Naive thymus-derived CD4-positive, alpha-beta T cell (primary cell): ENCODE measurements at regions of chr12 and their contacts with region 1.

Region 1: GRCh38 chr12:47715393-47715876 is 9.6 kb upstream of the RPAP3 start:
- DNase-seq: peak; percentile 56 to 83 (median 75)
- ATAC-seq: peak; percentile 87
- H3K4me3 ChIP-seq: no peak overlapping the region
- H3K4me3 Mint-ChIP-seq: peak overlapping the region in 7 of 10 donors; percentile 15 to 54 (median 44)
- H3K27ac ChIP-seq: no peak overlapping the region
- H3K27ac Mint-ChIP-seq: peak overlapping the region; percentile 26 to 91 (median 81)
- H3K4me1 ChIP-seq: peaks cover 0 to 25% of the 10 kb centered on the region in 2 donors
- H3K4me1 Mint-ChIP-seq: peaks cover 17 to 34% (median 26%) of the 10 kb centered on the region in 7 donors
- H3K27me3 ChIP-seq: no peaks in the 10 kb centered on the region
- H3K27me3 Mint-ChIP-seq: no peaks in the 10 kb centered on the region

Region 2: DNA sequence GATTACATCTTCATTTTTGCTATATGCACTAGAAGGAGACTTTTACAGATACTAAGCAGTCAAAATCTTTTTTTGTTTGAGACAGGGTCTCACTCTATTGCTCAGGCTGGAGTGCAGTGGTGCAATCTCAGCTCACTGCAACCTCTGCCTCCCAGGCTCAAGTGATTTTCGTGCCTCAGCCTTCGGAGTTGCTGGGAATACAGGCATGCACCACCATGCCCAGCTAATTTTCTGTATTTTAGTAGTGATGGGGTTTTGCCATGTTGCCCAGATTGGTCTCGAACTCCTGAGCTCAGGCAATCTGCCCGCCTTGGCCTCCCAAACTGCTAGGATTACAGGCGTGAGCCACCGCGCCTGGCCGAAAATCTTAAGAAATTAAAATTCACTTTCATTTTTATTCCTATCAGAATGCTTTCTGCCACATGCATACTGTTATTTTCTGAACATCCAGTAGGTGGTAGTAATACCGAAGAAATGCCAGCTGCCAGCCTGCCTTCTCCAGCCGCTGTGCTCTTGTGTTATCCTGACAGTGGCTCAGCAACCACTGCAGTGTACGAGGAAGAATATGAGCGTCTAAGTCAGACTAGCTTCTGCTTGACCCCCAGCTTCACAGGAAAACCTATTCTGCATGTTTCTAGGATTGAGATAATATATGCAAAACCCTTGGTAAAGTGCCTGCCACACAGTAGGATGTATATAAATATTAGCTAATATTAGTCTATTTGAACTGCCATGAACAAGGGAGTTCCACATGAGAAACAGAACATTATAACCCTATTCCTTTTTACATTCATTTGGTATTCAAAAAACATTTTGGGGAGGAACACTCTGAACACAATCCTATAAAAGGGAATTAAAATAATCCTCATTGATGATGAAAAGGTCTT is 63.8 kb before region 1 on chr12:
- CTCF ChIA-PET with region 1: interaction called, 5 read pairs
- POLR2A ChIA-PET with region 1: no interaction called
- intact Hi-C with region 1: loop called in 1 of 2 experiments (anchors 1 kb)
- DNase-seq: peak in 8 of 9 donors; percentile 39 to 69 (median 56)
- ATAC-seq: peak; percentile 97
- H3K4me3 ChIP-seq: peak overlapping the region; percentile 38
- H3K4me3 Mint-ChIP-seq: peak overlapping the region; percentile 21 to 75 (median 44)
- H3K27ac ChIP-seq: peak overlapping the region; percentile 9
- H3K27ac Mint-ChIP-seq: peak overlapping the region in 8 of 9 donors; percentile 11 to 94 (median 64)
- H3K4me1 ChIP-seq: peaks cover 5 to 6% of the 10 kb centered on the region in 2 donors
- H3K4me1 Mint-ChIP-seq: peaks cover 8 to 21% (median 16%) of the 10 kb centered on the region in 7 donors
- H3K27me3 ChIP-seq: no peaks in the 10 kb centered on the region
- H3K27me3 Mint-ChIP-seq: no peaks in the 10 kb centered on the region

Region 3: GRCh38 chr12:47767216-47767724 is 51.8 kb after region 1 on chr12:
- CTCF ChIA-PET with region 1: interaction called, 29 read pairs
- POLR2A ChIA-PET with region 1: interaction called, 5 read pairs
- intact Hi-C with region 1: loop called (anchors 1 kb)
- DNase-seq: peak; percentile 40 to 73 (median 57)
- ATAC-seq: peak; percentile 81
- H3K4me3 ChIP-seq: no peak overlapping the region
- H3K4me3 Mint-ChIP-seq: no peak overlapping the region
- H3K27ac ChIP-seq: no peak overlapping the region
- H3K27ac Mint-ChIP-seq: no peak overlapping the region
- H3K4me1 ChIP-seq: peaks cover 3 to 10% of the 10 kb centered on the region in 2 donors
- H3K4me1 Mint-ChIP-seq: peaks cover 0 to 16% (median 5%) of the 10 kb centered on the region in 7 donors
- H3K27me3 ChIP-seq: no peaks in the 10 kb centered on the region
- H3K27me3 Mint-ChIP-seq: peaks cover 0 to 13% (median 0%) of the 10 kb centered on the region in 5 donors

Region 4: DNA sequence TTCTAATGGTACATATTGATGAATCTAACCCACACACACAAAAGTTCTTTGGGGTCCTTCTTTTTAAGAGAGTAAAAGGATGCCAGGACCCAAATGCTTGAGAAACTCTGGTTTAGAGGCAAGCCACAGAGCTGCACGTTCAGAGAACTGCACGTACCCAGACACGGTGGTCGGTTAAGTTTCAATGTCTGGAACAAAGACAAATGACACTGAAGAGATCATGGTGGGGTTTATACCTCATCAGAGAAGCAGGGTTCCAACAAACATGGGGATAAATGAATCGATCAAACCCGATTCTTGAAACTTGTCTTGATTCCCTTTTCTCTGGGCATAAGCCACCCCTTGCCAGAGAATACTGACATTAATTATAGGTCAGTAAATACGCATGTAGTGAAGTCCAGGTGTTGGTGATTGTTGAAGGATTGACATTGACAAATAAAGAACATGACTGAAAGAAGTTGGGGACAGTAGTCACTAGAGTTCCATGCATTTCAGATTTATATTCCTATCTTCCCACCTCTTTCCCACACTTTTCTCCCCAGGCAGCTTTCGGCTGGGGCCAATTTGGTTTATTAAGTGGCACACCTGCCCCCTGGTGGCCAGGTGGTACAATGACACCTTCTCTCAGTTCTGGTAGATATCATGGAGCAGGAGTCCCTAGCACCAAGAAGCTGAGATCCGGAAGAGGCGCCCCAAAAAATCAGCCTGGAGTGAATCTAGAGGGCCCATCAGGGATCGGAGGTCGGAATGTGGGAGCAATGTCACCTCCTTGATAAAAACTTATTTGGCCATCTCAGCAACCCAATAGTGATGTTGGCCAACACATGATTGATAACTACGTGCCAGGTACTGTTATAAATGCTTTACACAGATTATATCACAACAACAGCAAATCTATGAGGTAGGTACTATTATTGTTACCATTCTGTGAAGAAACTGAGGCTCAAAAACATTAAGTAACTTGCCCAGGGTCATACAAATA is 122.0 kb after region 1 on chr12:
- CTCF ChIA-PET with region 1: interaction called, 56 read pairs
- POLR2A ChIA-PET with region 1: interaction called, 8 read pairs
- intact Hi-C with region 1: loop called (anchors 1 kb)
- DNase-seq: peak; percentile 52 to 80 (median 65)
- ATAC-seq: peak; percentile 68
- H3K4me3 ChIP-seq: no peak overlapping the region
- H3K4me3 Mint-ChIP-seq: no peak overlapping the region
- H3K27ac ChIP-seq: no peak overlapping the region
- H3K27ac Mint-ChIP-seq: peak overlapping the region in 8 of 9 donors; percentile 35 to 97 (median 76)
- H3K4me1 ChIP-seq: peaks cover 19 to 52% of the 10 kb centered on the region in 2 donors
- H3K4me1 Mint-ChIP-seq: peaks cover 38 to 71% (median 55%) of the 10 kb centered on the region in 7 donors
- H3K27me3 ChIP-seq: no peaks in the 10 kb centered on the region
- H3K27me3 Mint-ChIP-seq: no peaks in the 10 kb centered on the region

Region 5: GRCh38 chr12:47963340-47964040 is 248.1 kb after region 1 on chr12 and contains the start of gene TMEM106C:
- CTCF ChIA-PET with region 1: no interaction called
- POLR2A ChIA-PET with region 1: no interaction called
- intact Hi-C with region 1: loop called in 1 of 2 experiments (anchors 5 kb)
- DNase-seq: peak; percentile 88 to 94 (median 92)
- ATAC-seq: peak; percentile 99
- H3K4me3 ChIP-seq: peak within 1 kb of the TSS; percentile 90
- H3K4me3 Mint-ChIP-seq: peak within 1 kb of the TSS; percentile 92 to 100 (median 96)
- H3K27ac ChIP-seq: peak within 1 kb of the TSS; percentile 75
- H3K27ac Mint-ChIP-seq: peak within 1 kb of the TSS; percentile 86 to 94 (median 90)
- H3K4me1 ChIP-seq: peaks cover 7 to 13% of the 10 kb centered on the region in 2 donors
- H3K4me1 Mint-ChIP-seq: peaks cover 20 to 42% (median 34%) of the 10 kb centered on the region in 7 donors
- H3K27me3 ChIP-seq: no peaks in the 10 kb centered on the region
- H3K27me3 Mint-ChIP-seq: peaks cover 0 to 36% (median 6%) of the 10 kb centered on the region in 5 donors
- total RNA-seq, gene TMEM106C: 20.7 to 120 (median 34.4) TPM

Region 6: DNA sequence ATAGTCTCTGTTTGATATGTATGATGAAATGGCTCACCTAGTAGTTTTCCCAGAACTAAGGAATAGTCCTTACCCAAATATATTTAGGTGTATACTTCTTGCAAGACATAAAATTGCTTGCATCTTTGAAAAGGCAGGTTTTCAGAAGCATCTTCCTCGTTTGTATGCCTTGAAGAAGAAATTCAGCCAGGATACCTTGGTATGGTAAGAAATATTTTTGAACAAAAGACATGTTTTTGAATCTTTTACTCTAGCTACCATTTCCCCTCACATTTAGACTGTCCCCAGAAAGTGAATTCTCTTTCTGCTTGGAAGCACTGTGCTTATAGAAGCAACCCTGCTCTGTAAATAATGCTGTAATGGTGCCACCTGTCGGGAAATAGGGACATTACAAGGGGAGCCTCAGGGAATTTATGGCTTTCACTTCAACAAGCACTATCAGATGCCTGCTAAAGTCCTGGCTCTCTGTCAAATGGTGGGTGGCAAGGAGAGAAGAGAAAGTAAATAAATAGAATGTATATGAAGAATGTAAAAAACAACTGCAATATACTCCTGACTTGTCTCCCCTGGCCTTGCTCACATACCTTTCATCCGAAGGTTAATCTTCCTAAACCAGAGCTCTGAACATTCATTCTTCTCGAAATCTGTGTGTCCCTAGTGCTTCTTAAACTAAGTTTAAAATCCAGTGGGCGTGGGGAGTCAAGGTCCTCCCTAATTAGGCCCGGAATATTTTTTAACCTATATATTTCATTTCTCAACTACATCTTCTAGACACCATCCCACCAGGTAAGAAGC is 474.1 kb after region 1 on chr12:
- CTCF ChIA-PET with region 1: no interaction called
- POLR2A ChIA-PET with region 1: no interaction called
- intact Hi-C with region 1: loop called (anchors 1 to 2 kb)
- DNase-seq: peak; percentile 29 to 72 (median 62)
- ATAC-seq: peak; percentile 91
- H3K4me3 ChIP-seq: no peak overlapping the region
- H3K4me3 Mint-ChIP-seq: no peak overlapping the region
- H3K27ac ChIP-seq: no peak overlapping the region
- H3K27ac Mint-ChIP-seq: no peak overlapping the region
- H3K4me1 ChIP-seq: peaks cover 0 to under 1% of the 10 kb centered on the region in 2 donors
- H3K4me1 Mint-ChIP-seq: peaks cover 0 to 12% (median 0%) of the 10 kb centered on the region in 7 donors
- H3K27me3 ChIP-seq: no peaks in the 10 kb centered on the region
- H3K27me3 Mint-ChIP-seq: peaks cover 16 to 76% (median 22%) of the 10 kb centered on the region in 5 donors